GM10248 (cell line): ENCODE measurements at regions of chr2 and their contacts with region 1.

Region 1: DNA sequence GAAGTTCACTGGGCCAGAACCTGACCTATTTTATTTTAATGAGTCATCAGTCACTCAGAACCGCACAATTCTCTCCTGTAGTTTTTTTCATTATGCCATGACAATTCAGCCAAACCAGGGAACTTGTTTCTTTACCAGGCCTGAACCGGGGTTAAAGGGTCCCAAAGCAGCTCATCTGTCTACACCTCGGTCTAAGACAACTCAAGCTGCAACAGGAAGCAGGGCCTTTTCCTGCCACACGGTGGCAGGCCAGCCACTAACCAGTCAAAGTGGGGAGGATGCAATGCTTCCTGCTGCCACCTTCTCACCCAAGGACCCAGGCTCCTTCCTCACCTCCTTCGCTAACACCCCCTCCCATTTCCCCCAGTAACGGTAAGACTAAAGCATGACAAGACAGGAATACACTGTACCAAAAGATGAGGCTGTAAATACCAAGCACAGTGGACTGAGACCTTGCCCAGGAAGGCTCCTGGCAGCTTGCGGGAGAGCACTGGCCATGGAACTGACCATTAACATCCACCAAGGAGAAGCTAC is 56.7 kb upstream of the ACKR3 start:
- DNase-seq: peak; percentile 72
- CTCF ChIP-seq: peak; percentile 72

Region 2: GRCh38 chr2:236526455-236527158 is 13.6 kb after region 1 on chr2:
- CTCF ChIA-PET with region 1: interaction called, 15 read pairs
- POLR2A ChIA-PET with region 1: no interaction called
- DNase-seq: no peak
- CTCF ChIP-seq: no peak

Region 3: GRCh38 chr2:236558993-236559978 is 46.3 kb after region 1 on chr2:
- CTCF ChIA-PET with region 1: interaction called, 16 read pairs
- POLR2A ChIA-PET with region 1: no interaction called
- DNase-seq: no peak
- CTCF ChIP-seq: no peak

Region 4: DNA sequence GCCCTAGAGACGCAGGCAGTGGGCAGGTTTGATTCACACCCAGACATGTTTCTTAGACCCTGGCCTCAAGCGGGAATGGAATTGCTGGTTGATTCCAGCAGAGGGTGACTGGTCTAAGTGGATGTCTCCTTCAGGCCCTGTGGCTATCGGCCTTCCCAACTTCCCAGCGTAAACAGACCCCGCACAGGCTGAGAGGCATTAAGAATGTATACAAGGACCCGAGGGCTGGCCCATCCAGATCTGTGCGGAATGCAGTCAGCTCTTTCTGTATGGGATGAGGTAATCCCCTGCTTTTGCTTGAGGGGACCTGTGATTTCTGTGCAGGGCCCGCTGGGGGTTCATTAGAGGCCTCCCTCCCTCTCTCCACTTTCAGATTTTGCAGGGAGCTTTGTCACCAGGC is 63.1 kb after region 1 on chr2:
- CTCF ChIA-PET with region 1: interaction called, 137 read pairs
- POLR2A ChIA-PET with region 1: no interaction called
- DNase-seq: no peak
- CTCF ChIP-seq: no peak

Region 5: DNA sequence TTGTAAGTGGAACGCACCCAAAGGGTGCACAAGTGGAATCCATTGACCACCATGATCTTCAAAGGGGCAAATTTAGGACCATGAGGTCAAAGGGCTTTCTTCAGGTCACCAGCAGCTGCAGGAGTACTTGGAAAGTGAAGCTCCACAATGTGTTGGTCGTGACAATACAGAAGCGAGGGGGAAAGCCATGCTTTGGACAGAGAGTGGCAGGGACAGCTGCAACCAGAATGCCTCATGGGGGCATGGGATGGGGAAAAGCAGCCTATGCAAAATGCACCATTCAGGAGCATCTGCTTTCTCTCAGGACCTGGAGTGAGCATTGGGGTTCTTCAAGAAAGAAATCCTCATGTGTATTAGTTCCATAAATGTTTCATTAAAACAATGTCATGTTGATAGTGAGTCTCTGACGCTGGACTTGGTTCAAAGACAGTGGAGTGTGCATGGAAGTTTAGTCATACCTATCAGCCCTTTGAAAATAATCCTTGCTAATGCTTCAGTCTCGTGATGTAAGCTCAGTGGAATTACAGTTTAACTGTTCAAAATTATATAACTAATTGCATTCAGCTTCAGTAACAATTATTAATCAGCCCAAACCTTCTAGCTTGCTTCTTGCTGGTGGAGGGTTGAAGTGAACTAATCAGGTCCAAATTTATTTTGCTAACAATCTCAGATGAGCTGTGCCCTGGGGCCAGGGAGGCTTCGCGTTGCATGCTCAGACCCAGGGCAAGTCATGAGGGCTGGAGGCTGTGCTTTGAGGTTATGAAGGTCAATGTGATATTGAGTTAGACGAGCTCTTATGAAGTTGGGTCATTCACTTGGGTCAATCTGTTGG is 98.2 kb after region 1 on chr2:
- CTCF ChIA-PET with region 1: interaction called, 11 read pairs
- POLR2A ChIA-PET with region 1: no interaction called
- DNase-seq: no peak
- CTCF ChIP-seq: no peak

Region 6: GRCh38 chr2:236946871-236947270 is 433.9 kb after region 1 on chr2:
- CTCF ChIA-PET with region 1: no interaction called
- POLR2A ChIA-PET with region 1: no interaction called
- DNase-seq: no peak
- CTCF ChIP-seq: no peak